IMR-90 (cell line): ENCODE measurements at regions of chr1 and their contacts with region 1.

Region 1: GRCh38 chr1:3543076-3544039 is 68.0 kb downstream of the MEGF6 start:
- DNase-seq: peak; percentile 92
- ATAC-seq: peak; percentile 88
- H3K4me3 ChIP-seq: no peak overlapping the region
- H3K27ac ChIP-seq: peak overlapping the region; percentile 96
- H3K4me1 ChIP-seq: peaks cover 37% of the 10 kb centered on the region
- H3K27me3 ChIP-seq: no peaks in the 10 kb centered on the region
- CTCF ChIP-seq: no peak
- POLR2A ChIP-seq: no peak
- RAD21 ChIP-seq: no peak

Region 2: DNA sequence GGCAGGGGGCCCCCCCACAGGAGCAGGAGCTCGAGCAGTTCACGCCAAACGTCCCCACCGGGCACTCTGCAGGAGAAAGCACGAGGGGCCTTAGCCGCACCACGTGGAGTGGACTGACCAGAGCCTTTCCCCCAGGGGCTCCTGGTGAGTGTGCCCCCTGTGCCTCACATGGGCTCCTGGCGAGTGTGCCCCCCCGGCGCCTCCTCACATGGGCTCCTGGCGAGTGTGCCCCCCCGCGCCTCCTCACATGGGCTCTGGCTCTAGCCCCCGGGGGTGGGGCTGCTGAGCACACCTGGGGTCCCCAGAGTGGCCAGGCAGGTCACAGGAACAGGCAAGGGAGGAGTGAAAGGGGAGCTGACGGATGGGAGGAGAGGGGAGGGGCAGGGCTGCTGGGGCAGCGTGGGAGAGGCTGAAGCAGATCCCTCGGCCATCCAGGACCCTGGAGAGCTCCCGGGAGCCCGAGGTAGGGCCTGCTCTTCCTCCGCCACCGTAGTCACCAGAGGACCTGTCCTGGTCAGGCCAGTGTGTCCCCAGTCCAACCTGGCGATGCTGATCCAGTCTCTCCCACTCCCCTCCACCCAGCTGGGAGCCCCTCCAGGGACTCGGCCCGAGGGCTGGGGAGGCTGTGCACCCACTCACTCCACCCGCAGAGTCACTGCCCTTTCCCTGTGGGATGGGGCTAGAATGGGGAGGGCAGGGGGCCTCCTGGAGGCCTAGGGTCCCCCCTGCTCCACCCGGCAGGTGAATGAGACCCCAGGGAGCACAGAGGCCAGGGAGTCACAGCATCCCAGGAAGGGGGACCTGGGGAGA is 41.3 kb before region 1 on chr1:
- CTCF ChIA-PET with region 1: no interaction called
- POLR2A ChIA-PET with region 1: no interaction called
- dilution Hi-C with region 1: no loop called
- in situ Hi-C with region 1: no loop called
- intact Hi-C with region 1: loop called (anchors 5 kb)
- DNase-seq: peak; percentile 38
- ATAC-seq: peak; percentile 72
- H3K4me3 ChIP-seq: no peak overlapping the region
- H3K27ac ChIP-seq: no peak overlapping the region
- H3K4me1 ChIP-seq: peaks cover 7% of the 10 kb centered on the region; the same call in 1 of the 2 replicates
- H3K27me3 ChIP-seq: no peaks in the 10 kb centered on the region
- CTCF ChIP-seq: no peak
- POLR2A ChIP-seq: no peak
- RAD21 ChIP-seq: no peak